Activated naive CD4-positive, alpha-beta T cell treated with anti-CD3 and anti-CD28 coated beads for 36 hours (primary cell): ENCODE measurements at regions of chr5 and their contacts with region 1.

Region 1: DNA sequence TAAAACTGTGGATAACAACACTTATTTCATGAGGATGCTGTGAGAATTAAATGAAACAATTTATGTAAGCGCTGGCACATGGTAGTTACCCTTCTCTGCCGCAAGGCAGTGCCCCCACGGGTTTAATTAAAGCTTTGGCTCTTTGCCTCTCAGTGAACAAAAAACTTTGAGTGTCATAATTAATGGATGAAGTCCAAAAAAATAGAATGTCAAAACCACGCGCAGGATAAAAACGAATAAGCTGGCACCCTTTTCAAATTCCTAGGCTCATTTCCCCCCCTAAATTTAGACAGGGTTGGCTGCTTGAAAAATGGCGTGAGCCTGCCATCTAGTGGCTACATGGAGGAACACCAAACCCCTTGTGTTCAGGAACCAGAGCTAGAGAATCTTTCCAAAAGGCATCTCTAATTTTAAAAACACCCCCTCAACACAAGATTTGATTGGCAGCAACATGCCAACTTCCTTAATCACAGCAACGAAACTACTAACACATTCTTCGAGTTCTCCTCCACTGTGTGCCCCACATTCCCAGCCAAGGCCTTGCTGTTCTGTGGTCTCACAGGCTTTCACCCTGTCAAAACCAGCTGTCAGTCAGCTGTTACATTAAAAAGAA is 29.0 kb upstream of the CCNG1 start:
- DNase-seq: peak; percentile 65
- H3K4me3 Mint-ChIP-seq: no peak overlapping the region
- H3K27ac Mint-ChIP-seq: no peak overlapping the region
- H3K4me1 Mint-ChIP-seq: no peaks in the 10 kb centered on the region
- H3K27me3 Mint-ChIP-seq: peaks cover 2% of the 10 kb centered on the region

Region 2: DNA sequence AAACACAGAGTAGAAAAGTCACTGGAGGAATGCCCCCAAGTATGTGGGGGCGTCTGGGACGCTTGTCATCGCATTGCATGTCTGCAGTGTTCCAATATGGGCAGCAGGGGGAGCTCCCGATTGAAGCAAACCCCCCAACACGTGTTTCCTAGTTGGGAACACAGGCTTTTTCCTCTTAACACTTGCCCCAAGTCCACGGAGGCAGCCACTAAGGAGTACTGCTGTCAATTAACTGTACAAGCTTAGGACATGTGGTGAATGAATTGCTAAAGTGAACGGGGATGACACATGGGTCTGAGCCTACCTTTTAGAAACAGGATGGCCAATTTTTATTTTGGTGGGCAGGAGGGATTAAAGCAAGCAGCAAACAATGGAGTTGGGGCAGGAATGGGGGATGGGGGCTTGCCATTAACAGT is 1864.1 kb before region 1 on chr5:
- CTCF ChIA-PET with region 1: no interaction called
- intact Hi-C with region 1: loop called (anchors 2 kb)
- DNase-seq: peak; percentile 35
- H3K4me3 Mint-ChIP-seq: no peak overlapping the region
- H3K27ac Mint-ChIP-seq: no peak overlapping the region
- H3K4me1 Mint-ChIP-seq: peaks cover 13% of the 10 kb centered on the region
- H3K27me3 Mint-ChIP-seq: peaks cover 49% of the 10 kb centered on the region

Region 3: GRCh38 chr5:161851691-161852299 is 1556.6 kb before region 1 on chr5:
- CTCF ChIA-PET with region 1: no interaction called
- intact Hi-C with region 1: loop called (anchors 5 kb)
- DNase-seq: no peak
- H3K4me3 Mint-ChIP-seq: no peak overlapping the region
- H3K27ac Mint-ChIP-seq: no peak overlapping the region
- H3K4me1 Mint-ChIP-seq: no peaks in the 10 kb centered on the region
- H3K27me3 Mint-ChIP-seq: peaks cover 23% of the 10 kb centered on the region

Region 4: DNA sequence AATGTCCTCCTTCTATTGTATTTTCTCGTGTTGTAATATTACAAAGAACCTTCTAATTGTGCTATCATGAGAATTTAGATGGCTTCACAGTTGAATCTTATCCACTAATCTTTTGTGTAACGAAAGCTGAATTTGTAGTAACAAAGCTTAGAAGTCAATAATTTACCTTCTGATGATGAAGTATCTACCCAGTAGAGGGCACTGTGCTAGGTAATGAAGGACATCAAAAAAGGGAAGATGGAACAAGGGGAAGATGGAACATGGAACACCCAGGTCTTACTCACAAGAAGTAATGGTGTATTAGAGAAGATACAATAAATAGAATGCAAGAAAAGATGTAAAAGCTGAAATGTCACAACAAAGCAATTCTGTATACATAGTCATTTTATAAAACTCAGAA is 102.0 kb before region 1 on chr5:
- CTCF ChIA-PET with region 1: interaction called, 16 read pairs
- intact Hi-C with region 1: loop called (anchors 2 kb)
- DNase-seq: no peak
- H3K4me3 Mint-ChIP-seq: no peak overlapping the region
- H3K27ac Mint-ChIP-seq: no peak overlapping the region
- H3K4me1 Mint-ChIP-seq: no peaks in the 10 kb centered on the region
- H3K27me3 Mint-ChIP-seq: peaks cover 8% of the 10 kb centered on the region

Region 5: GRCh38 chr5:163347671-163348070 is 60.7 kb before region 1 on chr5:
- CTCF ChIA-PET with region 1: interaction called, 8 read pairs
- intact Hi-C with region 1: loop called (anchors 2 kb)
- DNase-seq: peak; percentile 76
- H3K4me3 Mint-ChIP-seq: no peak overlapping the region
- H3K27ac Mint-ChIP-seq: no peak overlapping the region
- H3K4me1 Mint-ChIP-seq: no peaks in the 10 kb centered on the region
- H3K27me3 Mint-ChIP-seq: no peaks in the 10 kb centered on the region

Region 6: DNA sequence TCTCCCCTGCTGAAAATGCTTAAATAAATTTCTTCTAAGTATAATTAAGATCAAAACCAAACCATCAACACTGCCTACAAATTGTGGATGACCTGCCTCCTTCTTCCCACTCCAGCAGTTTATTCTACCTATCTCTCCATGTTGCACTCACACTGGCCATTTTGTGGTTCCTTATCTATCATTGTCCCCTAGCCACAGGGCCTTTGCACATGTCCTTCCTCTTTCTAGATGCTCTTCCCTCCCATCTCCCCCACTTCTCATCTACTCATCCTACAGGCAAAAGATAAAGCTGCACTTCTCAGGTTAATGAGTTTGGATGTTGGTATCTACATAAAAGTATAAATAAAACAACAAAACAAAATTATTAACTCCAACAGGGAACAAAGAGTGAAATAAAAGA is 41.7 kb before region 1 on chr5:
- CTCF ChIA-PET with region 1: no interaction called
- intact Hi-C with region 1: no loop called
- DNase-seq: no peak
- H3K4me3 Mint-ChIP-seq: no peak overlapping the region
- H3K27ac Mint-ChIP-seq: no peak overlapping the region
- H3K4me1 Mint-ChIP-seq: no peaks in the 10 kb centered on the region
- H3K27me3 Mint-ChIP-seq: no peaks in the 10 kb centered on the region

Region 7: DNA sequence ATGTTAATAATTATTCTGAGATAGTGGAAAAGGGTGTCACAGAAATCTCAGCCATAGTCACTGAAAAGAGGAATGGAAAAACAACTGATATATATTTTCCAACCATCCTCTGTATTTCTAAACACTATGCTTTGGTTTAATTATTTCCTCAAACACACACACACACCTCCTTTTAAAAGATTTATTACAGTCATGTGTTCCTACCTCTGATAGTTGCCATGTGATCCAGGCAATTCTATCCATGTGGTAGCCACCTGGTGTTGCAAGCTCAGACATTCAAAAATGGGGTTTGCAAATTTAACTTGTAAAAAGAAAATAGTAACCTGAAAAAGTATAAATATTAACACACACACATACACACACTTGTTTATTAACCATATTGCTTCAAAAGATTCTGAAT is 11.1 kb before region 1 on chr5:
- CTCF ChIA-PET with region 1: interaction called, 10 read pairs
- intact Hi-C with region 1: no loop called
- DNase-seq: no peak
- H3K4me3 Mint-ChIP-seq: no peak overlapping the region
- H3K27ac Mint-ChIP-seq: no peak overlapping the region
- H3K4me1 Mint-ChIP-seq: no peaks in the 10 kb centered on the region
- H3K27me3 Mint-ChIP-seq: peaks cover 12% of the 10 kb centered on the region